PC-9 (cell line): ENCODE measurements at regions of chr12 and their contacts with region 1.

Region 1: GRCh38 chr12:79127271-79127751 is 262.7 kb downstream of the SYT1 start:
- DNase-seq: peak in 1 of 2 experiments; percentile 58
- H3K4me3 ChIP-seq: no peak overlapping the region
- H3K27ac ChIP-seq: no peak overlapping the region
- H3K4me1 ChIP-seq: 0 out of 2 replicates have a peak, but pooled peaks cover 8% of the 10 kb centered on the region
- H3K27me3 ChIP-seq: no peaks in the 10 kb centered on the region
- CTCF ChIP-seq: no peak

Region 2: GRCh38 chr12:78519422-78519821 is 607.9 kb before region 1 on chr12:
- CTCF ChIA-PET with region 1: interaction called, 11 read pairs
- POLR2A ChIA-PET with region 1: no interaction called
- intact Hi-C with region 1: no loop called
- DNase-seq: no peak
- H3K4me3 ChIP-seq: no peak overlapping the region
- H3K27ac ChIP-seq: no peak overlapping the region
- H3K4me1 ChIP-seq: no peaks in the 10 kb centered on the region
- H3K27me3 ChIP-seq: no peaks in the 10 kb centered on the region
- CTCF ChIP-seq: no peak

Region 3: DNA sequence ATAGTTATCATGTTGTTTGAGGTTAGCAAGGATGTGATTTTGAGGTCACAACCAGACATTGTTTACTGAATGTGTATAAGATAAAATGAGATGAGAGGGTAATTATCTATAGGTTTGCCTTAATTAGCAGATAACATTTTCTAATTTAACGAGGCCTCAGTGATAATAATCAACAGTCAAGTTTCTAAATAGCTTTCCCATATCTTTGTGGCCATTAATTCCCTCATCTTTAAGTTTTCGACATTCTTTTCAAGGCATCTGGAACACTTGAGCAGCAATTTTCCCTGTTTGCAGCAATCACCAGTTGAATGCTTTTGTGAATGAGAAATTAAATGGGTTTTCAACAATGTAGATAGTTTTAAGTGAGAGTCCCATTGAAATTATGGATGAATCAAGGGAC is 41.4 kb after region 1 on chr12:
- CTCF ChIA-PET with region 1: no interaction called
- POLR2A ChIA-PET with region 1: no interaction called
- intact Hi-C with region 1: no loop called
- DNase-seq: no peak
- H3K4me3 ChIP-seq: no peak overlapping the region
- H3K27ac ChIP-seq: no peak overlapping the region
- H3K4me1 ChIP-seq: no peaks in the 10 kb centered on the region
- H3K27me3 ChIP-seq: no peaks in the 10 kb centered on the region
- CTCF ChIP-seq: no peak

Region 4: GRCh38 chr12:79388011-79388410 is 260.7 kb after region 1 on chr12:
- CTCF ChIA-PET with region 1: no interaction called
- POLR2A ChIA-PET with region 1: no interaction called
- intact Hi-C with region 1: no loop called
- DNase-seq: no peak
- H3K4me3 ChIP-seq: no peak overlapping the region
- H3K27ac ChIP-seq: no peak overlapping the region
- H3K4me1 ChIP-seq: no peaks in the 10 kb centered on the region
- H3K27me3 ChIP-seq: no peaks in the 10 kb centered on the region
- CTCF ChIP-seq: no peak